MCF 10A (cell line): ENCODE measurements at regions of chr20 and their contacts with region 1.

Region 1: GRCh38 chr20:59940174-59940971 is at the starts of genes FAM217B and PPP1R3D:
- DNase-seq: peak; percentile 94
- H3K4me3 Mint-ChIP-seq: peak within 1 kb of the TSS; percentile 95
- H3K27ac Mint-ChIP-seq: peak within 1 kb of the TSS; percentile 96
- H3K4me1 Mint-ChIP-seq: peaks cover 27% of the 10 kb centered on the region
- H3K27me3 Mint-ChIP-seq: no peaks in the 10 kb centered on the region
- CTCF ChIP-seq: no peak
- total RNA-seq, gene FAM217B: 5.6 and 8.6 TPM in 2 replicates
- total RNA-seq, gene PPP1R3D: 2.4 and 3.5 TPM in 2 replicates

Region 2: DNA sequence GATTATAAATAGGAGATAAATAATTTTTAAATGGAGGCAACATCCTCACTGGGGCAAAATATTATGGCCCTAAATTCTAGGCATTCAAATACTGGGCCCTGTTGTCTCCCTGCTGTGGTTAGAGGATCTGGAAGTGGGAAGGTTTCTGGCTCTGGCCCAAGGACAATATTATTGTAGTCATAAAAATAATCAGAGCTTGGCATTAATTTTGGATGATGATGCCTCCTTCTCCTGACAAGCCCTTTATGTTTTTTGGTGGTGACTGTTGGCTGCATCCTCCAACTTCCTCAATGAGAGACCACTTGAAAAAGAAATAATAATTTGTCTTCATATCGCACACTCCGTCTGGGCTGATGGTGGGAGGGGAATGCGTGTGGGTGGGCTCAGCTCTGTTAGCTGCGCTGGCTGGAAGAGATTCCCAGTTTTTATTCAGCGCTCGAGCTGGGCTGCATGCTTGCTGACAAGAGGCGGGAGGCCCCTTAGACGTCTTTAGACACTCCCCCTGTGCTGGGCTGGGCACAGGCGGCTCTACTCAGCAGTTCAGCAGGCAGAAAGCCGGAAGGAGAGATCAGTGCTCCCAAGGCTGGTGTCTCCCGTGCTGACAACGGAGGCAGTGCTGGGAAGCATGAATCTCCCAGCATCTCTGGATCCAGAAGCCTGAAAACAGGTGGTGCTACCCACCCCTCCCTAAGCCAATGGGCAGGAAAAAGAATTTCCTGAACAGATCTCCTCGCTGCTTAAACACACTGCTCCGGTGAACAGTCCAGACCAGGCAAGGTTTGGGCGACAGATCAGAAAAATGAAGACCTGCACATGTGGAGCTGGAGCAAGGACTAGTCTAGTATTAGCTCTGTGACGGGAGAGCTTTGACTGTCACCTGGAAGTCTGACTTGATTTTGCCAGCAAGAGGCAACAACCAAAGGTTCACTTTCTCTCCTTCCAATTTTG is 104.7 kb before region 1 on chr20:
- CTCF ChIA-PET with region 1: interaction called, 4 read pairs
- POLR2A ChIA-PET with region 1: interaction called, 51 read pairs
- intact Hi-C with region 1: loop called (anchors 5 kb)
- DNase-seq: peak; percentile 81
- H3K4me3 Mint-ChIP-seq: peak overlapping the region; percentile 78
- H3K27ac Mint-ChIP-seq: peak overlapping the region; percentile 53
- H3K4me1 Mint-ChIP-seq: peaks cover 57% of the 10 kb centered on the region
- H3K27me3 Mint-ChIP-seq: no peaks in the 10 kb centered on the region
- CTCF ChIP-seq: no peak

Region 3: DNA sequence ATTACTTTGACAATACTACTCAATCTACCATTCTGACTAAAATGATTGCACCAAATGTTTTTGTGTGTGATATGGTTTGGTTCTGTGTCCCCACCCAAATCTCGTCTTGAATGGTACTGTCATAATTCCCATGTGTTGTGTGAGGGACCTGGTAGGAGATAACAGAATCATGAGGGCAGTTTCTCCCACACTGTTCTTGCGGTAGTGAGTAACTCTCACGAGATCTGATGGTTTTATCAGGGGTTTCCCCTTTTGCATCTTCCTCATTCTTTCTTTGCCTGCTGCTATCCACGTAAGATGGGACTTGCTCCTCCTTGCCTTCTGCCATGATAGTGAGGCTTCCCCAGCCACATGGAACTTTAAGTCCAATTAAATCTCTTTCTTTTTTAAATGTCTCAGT is 27.8 kb before region 1 on chr20:
- CTCF ChIA-PET with region 1: no interaction called
- POLR2A ChIA-PET with region 1: interaction called, 11 read pairs
- intact Hi-C with region 1: no loop called
- DNase-seq: no peak
- H3K4me3 Mint-ChIP-seq: no peak overlapping the region
- H3K27ac Mint-ChIP-seq: no peak overlapping the region
- H3K4me1 Mint-ChIP-seq: no peaks in the 10 kb centered on the region
- H3K27me3 Mint-ChIP-seq: peaks cover 10% of the 10 kb centered on the region
- CTCF ChIP-seq: no peak

Region 4: DNA sequence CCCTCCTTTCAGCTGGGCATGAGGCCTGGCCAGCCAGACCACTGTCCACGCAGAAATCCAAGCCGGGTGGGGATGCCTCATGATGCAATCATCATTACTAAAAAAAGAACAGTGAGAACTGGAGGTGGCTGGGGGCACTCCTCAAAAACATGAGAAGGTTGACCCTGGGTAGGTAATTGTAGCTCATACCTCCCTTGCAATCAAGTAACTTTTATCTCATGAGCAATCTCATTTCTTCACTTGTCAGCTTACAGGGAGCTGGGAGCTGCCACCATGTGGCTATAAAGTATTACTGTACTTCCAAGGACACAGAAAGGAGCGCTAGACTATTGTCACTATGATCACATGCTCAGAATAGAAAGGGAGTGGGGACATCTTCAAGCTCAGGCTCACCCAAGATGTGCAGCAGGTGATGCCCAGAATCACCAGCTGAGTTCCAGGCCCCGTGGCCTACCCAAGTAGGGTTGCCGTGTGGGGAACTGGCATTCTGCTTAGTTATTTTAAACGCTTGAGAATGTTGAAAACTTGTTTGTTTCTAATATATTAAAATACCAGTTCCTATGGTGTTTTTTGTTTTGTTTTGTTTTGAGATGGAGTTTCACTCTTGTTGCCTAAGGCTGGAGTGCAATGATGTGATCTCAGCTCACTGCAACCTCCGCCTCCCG is 14.9 kb after region 1 on chr20:
- CTCF ChIA-PET with region 1: interaction called, 39 read pairs
- POLR2A ChIA-PET with region 1: interaction called, 45 read pairs
- intact Hi-C with region 1: no loop called
- DNase-seq: no peak
- H3K4me3 Mint-ChIP-seq: no peak overlapping the region
- H3K27ac Mint-ChIP-seq: no peak overlapping the region
- H3K4me1 Mint-ChIP-seq: no peaks in the 10 kb centered on the region
- H3K27me3 Mint-ChIP-seq: no peaks in the 10 kb centered on the region
- CTCF ChIP-seq: peak; percentile 10

Region 5: DNA sequence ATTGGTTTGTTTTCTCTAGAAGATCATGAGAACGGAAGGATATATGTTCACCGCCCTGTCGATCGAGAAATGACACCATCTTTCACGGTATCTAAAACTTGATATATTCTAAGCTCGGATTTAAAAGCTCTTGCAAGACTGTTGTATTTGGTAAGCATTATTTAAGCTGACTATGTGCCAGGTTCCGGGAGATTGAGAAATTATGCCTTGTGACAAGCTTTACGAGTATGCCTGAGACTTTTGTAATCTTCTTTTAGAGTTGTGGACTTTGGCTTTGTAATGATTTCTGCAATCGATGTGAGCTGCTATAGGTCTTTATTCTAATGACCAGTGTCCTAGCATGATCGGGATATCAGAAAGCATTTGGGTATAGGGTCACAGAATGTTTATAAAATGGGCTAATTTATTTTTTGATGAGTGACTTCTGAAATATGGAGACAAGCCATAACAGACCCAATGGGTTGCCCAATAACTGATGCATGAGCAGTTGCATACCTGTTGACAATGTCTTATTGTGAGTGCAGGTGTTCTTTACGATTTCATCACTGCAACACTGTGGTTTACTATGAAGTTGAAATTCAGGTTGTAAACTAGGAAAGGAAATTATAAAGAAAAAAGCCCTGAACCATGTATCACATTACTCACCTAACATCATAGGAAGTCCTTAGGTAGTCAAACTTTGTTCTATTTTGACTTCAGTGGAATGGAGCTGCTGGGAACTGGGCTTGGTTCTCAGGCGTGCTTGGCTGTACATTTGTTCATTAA is 31.8 kb after region 1 on chr20:
- CTCF ChIA-PET with region 1: interaction called, 15 read pairs
- POLR2A ChIA-PET with region 1: interaction called, 47 read pairs
- intact Hi-C with region 1: no loop called
- DNase-seq: peak; percentile 82
- H3K4me3 Mint-ChIP-seq: peak overlapping the region; percentile 37
- H3K27ac Mint-ChIP-seq: peak overlapping the region; percentile 80
- H3K4me1 Mint-ChIP-seq: peaks cover 20% of the 10 kb centered on the region
- H3K27me3 Mint-ChIP-seq: no peaks in the 10 kb centered on the region
- CTCF ChIP-seq: no peak